Calu3 (cell line): ENCODE measurements at regions of chr7 and their contacts with region 1.

Region 1: GRCh38 chr7:5139998-5140397 is 50.0 kb upstream of the WIPI2 start:
- DNase-seq: peak; percentile 58
- H3K4me3 Mint-ChIP-seq: no peak overlapping the region
- H3K27ac Mint-ChIP-seq: no peak overlapping the region
- H3K4me1 Mint-ChIP-seq: no peaks in the 10 kb centered on the region
- H3K27me3 Mint-ChIP-seq: peaks cover 48% of the 10 kb centered on the region
- CTCF ChIP-seq: peak; percentile 55

Region 2: GRCh38 chr7:5177060-5177459 is 37.1 kb after region 1 on chr7:
- CTCF ChIA-PET with region 1: no interaction called
- intact Hi-C with region 1: loop called (anchors 1 kb)
- DNase-seq: peak; percentile 69
- H3K4me3 Mint-ChIP-seq: peak overlapping the region; percentile 38
- H3K27ac Mint-ChIP-seq: peak overlapping the region; percentile 14
- H3K4me1 Mint-ChIP-seq: peaks cover 14% of the 10 kb centered on the region
- H3K27me3 Mint-ChIP-seq: peaks cover 24% of the 10 kb centered on the region
- CTCF ChIP-seq: no peak

Region 3: GRCh38 chr7:5203183-5203537 is 63.2 kb after region 1 on chr7:
- CTCF ChIA-PET with region 1: interaction called, 11 read pairs
- intact Hi-C with region 1: no loop called
- DNase-seq: no peak
- H3K4me3 Mint-ChIP-seq: no peak overlapping the region
- H3K27ac Mint-ChIP-seq: no peak overlapping the region
- H3K4me1 Mint-ChIP-seq: no peaks in the 10 kb centered on the region
- H3K27me3 Mint-ChIP-seq: no peaks in the 10 kb centered on the region
- CTCF ChIP-seq: no peak

Region 4: DNA sequence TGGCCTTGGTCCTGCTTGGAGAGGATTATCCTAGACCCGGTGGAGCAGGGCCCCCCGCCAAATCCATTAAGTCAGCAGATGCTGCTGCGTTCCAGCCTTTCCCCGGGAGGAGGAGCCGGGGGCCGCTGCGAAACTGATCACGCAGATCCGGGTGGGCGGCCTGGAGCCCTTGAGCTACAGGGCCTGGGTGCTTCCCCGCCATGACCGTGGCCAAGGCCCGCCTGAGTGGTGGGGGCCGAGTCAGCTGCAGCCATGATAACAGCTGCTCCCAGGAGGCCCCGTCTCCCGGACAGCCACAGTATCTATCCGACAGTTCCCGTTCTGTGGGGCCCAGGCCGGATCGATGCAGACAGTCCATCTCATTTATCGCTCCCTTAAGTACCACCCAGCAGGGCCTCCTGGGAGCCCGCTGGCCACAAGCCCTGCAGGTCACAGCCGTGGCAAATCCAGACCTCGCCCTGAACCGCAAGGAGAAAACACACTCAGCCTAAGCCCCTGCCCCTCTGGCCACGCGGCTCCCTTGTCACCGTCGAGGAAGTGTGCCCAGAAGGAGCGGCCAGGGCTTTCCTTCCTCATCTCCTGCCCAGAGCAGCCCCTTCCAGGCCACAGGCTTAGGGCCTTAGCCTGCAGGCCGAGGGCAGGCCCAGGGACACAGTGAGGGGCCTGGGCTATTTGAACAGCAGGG is 108.3 kb after region 1 on chr7:
- CTCF ChIA-PET with region 1: no interaction called
- intact Hi-C with region 1: no loop called
- DNase-seq: no peak
- H3K4me3 Mint-ChIP-seq: no peak overlapping the region
- H3K27ac Mint-ChIP-seq: no peak overlapping the region
- H3K4me1 Mint-ChIP-seq: no peaks in the 10 kb centered on the region
- H3K27me3 Mint-ChIP-seq: peaks cover 38% of the 10 kb centered on the region
- CTCF ChIP-seq: no peak